GM23248 (cell line): ENCODE measurements at regions of chr2 and their contacts with region 1.

Region 1: GRCh38 chr2:101205521-101205998 is 47.1 kb upstream of the CNOT11 start:
- DNase-seq: peak; percentile 92
- H3K4me3 ChIP-seq: peak overlapping the region; percentile 67
- H3K27ac ChIP-seq: peak overlapping the region; percentile 40
- H3K4me1 ChIP-seq: peaks cover 4% of the 10 kb centered on the region
- H3K27me3 ChIP-seq: no peaks in the 10 kb centered on the region

Region 2: GRCh38 chr2:100610381-100610831 is 595.2 kb before region 1 on chr2:
- in situ Hi-C with region 1: loop called (anchors 25 kb)
- DNase-seq: peak; percentile 80
- H3K4me3 ChIP-seq: no peak overlapping the region
- H3K27ac ChIP-seq: no peak overlapping the region
- H3K4me1 ChIP-seq: peaks cover 7% of the 10 kb centered on the region; the same call in 1 of the 2 replicates
- H3K27me3 ChIP-seq: no peaks in the 10 kb centered on the region

Region 3: DNA sequence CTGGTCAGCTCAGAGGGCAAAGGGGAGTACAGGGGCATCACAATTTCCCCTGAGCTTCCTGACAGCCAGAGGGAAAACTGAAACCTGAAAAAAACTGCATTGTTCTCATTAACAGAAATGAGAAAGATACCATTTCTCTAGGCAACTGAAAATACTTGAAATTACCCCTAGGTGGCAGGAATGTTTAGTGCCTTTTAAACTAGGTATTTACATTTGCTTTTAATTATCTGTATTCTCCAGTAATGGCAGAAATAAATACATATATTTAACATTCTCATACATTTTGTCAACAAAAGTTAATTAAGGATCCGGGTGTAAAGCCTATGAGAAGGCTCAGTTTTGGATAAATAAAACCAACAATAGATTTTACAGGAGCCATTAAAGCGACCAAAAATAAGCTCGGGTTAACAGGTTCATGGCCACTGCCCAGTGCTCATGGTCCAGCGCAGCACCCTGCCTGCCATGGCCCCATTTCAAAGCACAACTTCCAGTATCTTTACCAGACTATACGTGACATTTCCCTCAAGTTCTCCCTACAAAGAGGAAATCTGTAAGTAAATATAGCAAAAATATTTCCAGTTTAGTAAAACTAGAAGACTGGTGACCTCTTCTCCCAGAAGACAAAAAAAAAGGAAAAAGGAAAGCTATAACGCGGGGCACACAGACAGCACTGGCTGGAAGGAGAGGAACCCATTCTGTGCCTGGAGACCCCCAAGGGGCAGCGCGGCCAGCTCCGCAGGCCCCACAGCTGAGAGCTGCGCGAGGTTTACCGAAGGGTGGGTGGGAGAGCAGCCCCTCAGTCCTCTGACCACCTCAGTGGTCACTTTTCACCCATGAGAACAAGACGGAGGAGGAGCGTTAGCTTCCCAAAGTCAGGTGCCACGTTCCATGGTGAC is 168.8 kb before region 1 on chr2:
- in situ Hi-C with region 1: loop called (anchors 10 kb)
- DNase-seq: peak; percentile 65
- H3K4me3 ChIP-seq: no peak overlapping the region
- H3K27ac ChIP-seq: no peak overlapping the region
- H3K4me1 ChIP-seq: no peaks in the 10 kb centered on the region
- H3K27me3 ChIP-seq: no peaks in the 10 kb centered on the region

Region 4: GRCh38 chr2:101463891-101464641 is 258.5 kb after region 1 on chr2:
- in situ Hi-C with region 1: no loop called
- DNase-seq: peak; percentile 93
- H3K4me3 ChIP-seq: peak overlapping the region; percentile 15; the same call in 1 of the 2 replicates
- H3K27ac ChIP-seq: peak overlapping the region; percentile 80
- H3K4me1 ChIP-seq: peaks cover 37% of the 10 kb centered on the region
- H3K27me3 ChIP-seq: no peaks in the 10 kb centered on the region